Caco-2 (cell line): ENCODE measurements at regions of chr3 and their contacts with region 1.

Region 1: DNA sequence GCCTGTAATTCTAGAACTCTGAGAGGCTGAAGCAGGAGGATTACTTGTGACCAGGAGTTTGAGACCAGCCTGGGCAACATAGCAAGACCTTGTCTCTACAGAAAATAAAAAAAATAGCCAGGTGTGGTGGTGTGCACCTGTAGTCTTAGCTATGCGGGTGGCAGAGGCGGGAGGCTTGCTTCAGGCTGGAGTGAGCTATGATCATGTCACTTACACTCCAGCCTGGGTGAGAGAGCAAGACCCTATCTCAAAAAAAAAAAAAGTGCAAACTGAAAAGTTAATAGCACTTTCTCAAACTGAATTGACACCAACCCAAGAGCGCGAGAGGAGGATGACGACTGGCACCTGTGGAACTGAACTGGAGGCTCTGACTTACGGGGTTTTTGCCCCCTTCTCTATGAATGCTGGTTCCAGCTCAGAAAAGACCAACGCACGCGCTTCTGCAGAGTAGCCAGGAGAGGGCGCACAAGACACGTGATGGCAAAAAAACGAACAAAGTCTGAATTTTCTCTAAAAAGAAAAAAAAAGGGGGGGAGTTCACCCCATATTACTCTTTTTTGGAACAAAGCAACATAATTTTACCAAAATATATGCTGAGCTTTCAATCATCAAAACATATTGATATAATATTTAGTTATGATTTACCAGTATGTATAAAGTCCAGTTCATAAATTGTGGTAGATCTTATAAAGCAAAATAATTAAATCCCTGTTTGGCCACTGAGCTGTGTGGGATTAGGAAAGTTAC is 23.7 kb downstream of the CFAP92 start:
- DNase-seq: peak in 1 of 2 experiments; percentile 62
- H3K4me3 ChIP-seq: no peak overlapping the region
- H3K4me3 Mint-ChIP-seq: no peak overlapping the region
- H3K27ac Mint-ChIP-seq: no peak overlapping the region
- H3K4me1 ChIP-seq: no peaks in the 10 kb centered on the region
- H3K4me1 Mint-ChIP-seq: no peaks in the 10 kb centered on the region
- H3K27me3 ChIP-seq: no peaks in the 10 kb centered on the region
- H3K27me3 Mint-ChIP-seq: peaks cover 1% of the 10 kb centered on the region
- CTCF ChIP-seq: peak; percentile 89 to 97

Region 2: GRCh38 chr3:129003578-129004160 is 33.5 kb after region 1 on chr3:
- CTCF ChIA-PET with region 1: interaction called, 13 read pairs
- POLR2A ChIA-PET with region 1: no interaction called
- intact Hi-C with region 1: no loop called
- DNase-seq: peak; percentile 78 to 89
- H3K4me3 ChIP-seq: peak overlapping the region; percentile 56
- H3K4me3 Mint-ChIP-seq: peak overlapping the region; percentile 75
- H3K27ac Mint-ChIP-seq: peak overlapping the region; percentile 82
- H3K4me1 ChIP-seq: no peaks in the 10 kb centered on the region
- H3K4me1 Mint-ChIP-seq: peaks cover 21% of the 10 kb centered on the region
- H3K27me3 ChIP-seq: no peaks in the 10 kb centered on the region
- H3K27me3 Mint-ChIP-seq: no peaks in the 10 kb centered on the region
- CTCF ChIP-seq: peak in 1 of 2 experiments; percentile 50

Region 3: DNA sequence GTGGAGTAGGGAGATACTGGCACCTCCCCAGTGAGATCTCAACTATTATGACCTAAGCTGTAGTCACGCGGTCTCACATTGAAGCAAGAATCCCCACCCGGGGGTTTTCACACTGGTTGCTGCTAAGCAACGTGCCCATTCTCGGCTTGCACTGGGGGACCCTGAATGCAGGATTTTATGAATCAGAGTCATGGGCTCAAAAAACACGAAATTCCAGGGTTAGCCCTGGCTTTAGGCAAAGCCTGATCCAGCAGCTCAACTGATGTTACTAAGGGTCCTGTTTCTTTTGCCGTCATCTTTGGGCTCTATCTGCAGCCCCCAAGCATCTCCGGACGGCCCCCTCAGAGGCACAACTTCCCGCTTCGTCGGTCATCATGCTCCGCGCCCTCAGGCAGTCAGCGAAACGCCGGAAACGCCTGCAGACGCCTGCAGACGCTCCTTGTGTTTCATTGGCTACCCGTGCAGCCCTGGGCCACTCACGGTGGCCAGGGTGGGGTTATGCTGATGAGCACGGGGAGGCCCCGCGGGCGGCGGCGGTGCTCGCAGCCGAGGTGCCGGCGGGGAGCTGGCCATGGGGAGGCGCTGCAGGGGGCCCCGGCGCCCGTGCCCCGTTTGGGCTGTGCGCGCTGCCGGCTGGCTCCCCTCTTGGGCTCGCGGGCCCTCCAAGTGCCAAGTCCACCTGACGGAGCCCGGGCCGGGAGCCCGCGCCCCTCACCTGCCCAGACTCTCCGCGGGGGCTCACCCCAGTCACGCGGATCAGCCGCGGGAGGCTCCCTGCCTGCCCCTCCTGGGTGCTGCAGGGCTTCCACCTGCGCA is 56.8 kb after region 1 on chr3:
- CTCF ChIA-PET with region 1: interaction called, 17 read pairs
- POLR2A ChIA-PET with region 1: no interaction called
- intact Hi-C with region 1: no loop called
- DNase-seq: peak; percentile 93 to 95
- H3K4me3 ChIP-seq: peak overlapping the region; percentile 44
- H3K4me3 Mint-ChIP-seq: peak overlapping the region; percentile 77
- H3K27ac Mint-ChIP-seq: peak overlapping the region; percentile 73
- H3K4me1 ChIP-seq: peaks cover 6% of the 10 kb centered on the region; the same call in 1 of the 2 replicates
- H3K4me1 Mint-ChIP-seq: peaks cover 7% of the 10 kb centered on the region
- H3K27me3 ChIP-seq: no peaks in the 10 kb centered on the region
- H3K27me3 Mint-ChIP-seq: peaks cover 3% of the 10 kb centered on the region
- CTCF ChIP-seq: peak; percentile 48 to 67

Region 4: DNA sequence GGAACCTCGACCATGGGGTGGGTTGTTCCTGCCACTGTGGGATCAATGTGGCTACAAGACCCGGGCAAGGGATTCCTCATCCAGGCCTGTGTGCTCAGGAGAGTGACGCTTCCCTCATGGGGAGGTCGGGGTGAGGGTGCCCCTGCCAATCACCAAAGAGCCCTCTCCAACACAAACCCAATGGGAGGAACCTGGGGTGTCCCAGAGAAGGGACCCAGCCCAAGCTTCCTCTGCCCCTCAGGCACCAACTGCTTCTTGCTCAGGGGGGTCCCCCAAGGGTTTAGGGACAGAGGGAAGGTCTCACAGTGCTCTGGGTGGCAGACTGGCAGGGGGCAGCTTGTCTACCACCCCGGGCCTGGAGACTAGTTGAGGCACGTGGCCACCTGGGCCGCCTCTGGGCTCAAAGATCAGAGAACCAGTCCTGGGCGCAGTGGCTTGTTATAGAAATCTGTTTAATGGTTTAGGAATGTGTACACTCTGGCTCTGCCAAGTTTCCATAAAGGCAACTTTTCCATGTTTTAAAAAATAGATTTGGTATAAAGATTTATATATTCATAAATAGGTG is 117.1 kb after region 1 on chr3:
- CTCF ChIA-PET with region 1: interaction called, 13 read pairs
- POLR2A ChIA-PET with region 1: no interaction called
- intact Hi-C with region 1: no loop called
- DNase-seq: no peak
- H3K4me3 ChIP-seq: no peak overlapping the region
- H3K4me3 Mint-ChIP-seq: no peak overlapping the region
- H3K27ac Mint-ChIP-seq: no peak overlapping the region
- H3K4me1 ChIP-seq: no peaks in the 10 kb centered on the region
- H3K4me1 Mint-ChIP-seq: no peaks in the 10 kb centered on the region
- H3K27me3 ChIP-seq: no peaks in the 10 kb centered on the region
- H3K27me3 Mint-ChIP-seq: no peaks in the 10 kb centered on the region
- CTCF ChIP-seq: no peak

Region 5: DNA sequence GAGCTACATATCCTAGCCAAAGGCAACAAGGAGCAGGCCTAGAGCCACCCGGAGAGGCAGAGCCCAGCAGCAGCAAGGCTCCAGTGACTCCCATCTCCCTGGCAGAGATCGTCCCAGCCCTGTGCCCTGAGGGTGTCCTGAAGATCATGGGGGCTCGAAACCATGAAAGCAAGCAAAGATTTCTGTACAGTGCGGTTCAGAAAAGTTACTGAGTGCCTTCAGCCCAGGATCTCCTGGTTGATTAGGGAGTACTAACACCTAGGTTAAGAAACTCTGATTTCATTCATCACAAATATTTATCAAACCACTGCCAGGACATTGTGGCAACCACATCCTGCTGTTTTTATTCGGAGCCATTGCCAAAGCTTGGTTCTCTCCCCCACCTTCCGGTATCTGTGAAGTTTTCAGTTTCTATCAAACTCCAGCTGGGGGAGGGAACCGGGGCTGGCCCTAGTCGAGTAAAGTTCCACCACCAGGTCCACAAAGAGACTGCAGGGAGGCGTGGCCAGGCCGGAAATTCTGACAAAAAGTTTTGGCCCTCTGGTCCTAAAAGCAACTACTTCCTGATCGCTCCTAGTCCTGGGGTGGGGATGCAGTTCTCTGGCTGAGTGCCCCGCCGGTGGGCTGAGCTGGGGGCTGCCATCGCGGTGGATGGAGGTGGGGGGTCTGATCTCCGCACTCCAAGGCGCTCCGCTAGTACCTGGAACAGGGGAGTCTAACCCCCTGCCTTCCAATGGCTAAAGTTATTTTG is 150.3 kb after region 1 on chr3:
- CTCF ChIA-PET with region 1: interaction called, 10 read pairs
- POLR2A ChIA-PET with region 1: no interaction called
- intact Hi-C with region 1: no loop called
- DNase-seq: peak; percentile 80 to 81
- H3K4me3 ChIP-seq: peak overlapping the region; percentile 78
- H3K4me3 Mint-ChIP-seq: peak overlapping the region; percentile 80
- H3K27ac Mint-ChIP-seq: peak overlapping the region; percentile 88
- H3K4me1 ChIP-seq: peaks cover 40% of the 10 kb centered on the region
- H3K4me1 Mint-ChIP-seq: peaks cover 36% of the 10 kb centered on the region
- H3K27me3 ChIP-seq: no peaks in the 10 kb centered on the region
- H3K27me3 Mint-ChIP-seq: no peaks in the 10 kb centered on the region
- CTCF ChIP-seq: peak in 1 of 2 experiments; percentile 15

Region 6: DNA sequence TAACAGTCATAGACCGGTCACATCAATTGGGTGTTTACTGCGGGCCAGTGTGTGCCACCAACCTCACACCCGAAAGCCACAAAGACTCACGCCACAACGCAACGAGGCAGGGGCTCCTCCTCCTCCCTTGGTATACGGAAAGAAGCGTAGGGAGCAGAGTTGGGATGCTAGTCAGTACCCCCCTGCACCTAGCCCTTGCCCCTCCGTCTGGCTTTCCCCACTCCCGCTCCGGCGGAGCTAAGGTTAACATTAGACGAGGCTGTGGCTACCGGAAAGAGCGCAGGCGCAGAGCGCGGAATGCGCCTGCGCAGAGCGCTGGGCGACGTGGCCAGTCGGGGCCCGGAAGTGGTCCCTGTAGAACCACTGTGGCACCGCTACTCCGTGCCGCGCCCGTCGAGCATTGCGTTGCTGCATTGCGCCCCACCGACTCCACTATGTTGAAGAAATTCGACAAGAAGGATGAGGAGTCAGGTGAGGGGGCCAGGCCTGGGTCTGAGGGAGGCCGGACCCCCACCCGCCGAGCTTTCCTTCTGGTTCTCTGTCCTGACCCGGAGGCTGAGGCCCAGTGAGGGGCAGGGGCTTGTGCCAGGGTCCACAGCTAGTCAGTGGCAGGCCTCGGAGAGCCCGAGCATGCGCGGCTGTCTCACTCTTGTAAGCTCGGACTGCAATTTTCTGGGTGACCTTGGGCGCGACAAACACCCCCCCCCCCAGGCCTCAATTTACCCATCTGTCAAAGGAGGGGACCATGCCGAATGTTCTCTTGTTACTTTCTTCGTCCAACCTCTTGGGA is 279.3 kb after region 1 on chr3 and contains the start of gene COPG1:
- CTCF ChIA-PET with region 1: interaction called, 26 read pairs
- POLR2A ChIA-PET with region 1: no interaction called
- intact Hi-C with region 1: loop called (anchors 2 kb)
- DNase-seq: peak; percentile 86 to 90
- H3K4me3 ChIP-seq: peak within 1 kb of the TSS; percentile 85
- H3K4me3 Mint-ChIP-seq: peak within 1 kb of the TSS; percentile 94
- H3K27ac Mint-ChIP-seq: peak within 1 kb of the TSS; percentile 96
- H3K4me1 ChIP-seq: no peaks in the 10 kb centered on the region
- H3K4me1 Mint-ChIP-seq: peaks cover 7% of the 10 kb centered on the region
- H3K27me3 ChIP-seq: no peaks in the 10 kb centered on the region
- H3K27me3 Mint-ChIP-seq: no peaks in the 10 kb centered on the region
- CTCF ChIP-seq: no peak
- total RNA-seq, gene COPG1: 178 TPM in 2 replicates

Region 7: DNA sequence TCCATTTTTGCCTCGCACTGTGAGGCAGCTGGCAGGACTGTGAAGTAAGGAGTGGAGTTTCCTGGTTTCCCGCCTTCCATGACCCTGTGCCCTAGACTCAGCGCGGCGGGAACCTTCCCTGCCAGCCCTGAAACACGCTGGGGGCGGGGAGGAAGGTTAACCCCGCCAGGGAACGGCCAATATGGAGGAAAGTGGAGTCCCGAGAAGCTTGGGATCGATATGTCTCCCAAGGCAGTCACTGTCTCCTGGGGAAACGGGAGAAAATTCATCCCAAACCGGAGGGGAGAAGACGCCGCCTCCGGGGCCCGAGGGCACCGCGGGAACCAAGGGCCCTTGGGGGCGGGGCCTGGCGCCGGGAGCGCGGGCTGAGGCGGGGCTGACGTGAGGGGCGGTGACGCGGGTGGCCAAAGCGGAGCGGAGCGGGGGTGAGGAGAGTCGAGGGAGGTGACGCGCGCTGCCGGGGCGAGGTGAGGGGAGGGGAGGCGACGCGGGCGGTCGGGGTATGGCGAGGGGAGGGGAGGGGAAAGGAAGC is 308.3 kb after region 1 on chr3 and contains the start of gene HMCES:
- CTCF ChIA-PET with region 1: no interaction called
- POLR2A ChIA-PET with region 1: no interaction called
- intact Hi-C with region 1: no loop called
- DNase-seq: peak; percentile 85 to 93
- H3K4me3 ChIP-seq: peak within 1 kb of the TSS; percentile 81
- H3K4me3 Mint-ChIP-seq: peak within 1 kb of the TSS; percentile 98
- H3K27ac Mint-ChIP-seq: peak within 1 kb of the TSS; percentile 98
- H3K4me1 ChIP-seq: peaks cover 7% of the 10 kb centered on the region
- H3K4me1 Mint-ChIP-seq: peaks cover 15% of the 10 kb centered on the region
- H3K27me3 ChIP-seq: no peaks in the 10 kb centered on the region
- H3K27me3 Mint-ChIP-seq: no peaks in the 10 kb centered on the region
- CTCF ChIP-seq: no peak
- total RNA-seq, gene HMCES: 47.7 and 47.9 TPM in 2 replicates